K562 (cell line): ENCODE measurements at regions of chr19 and their contacts with region 1.

Region 1: DNA sequence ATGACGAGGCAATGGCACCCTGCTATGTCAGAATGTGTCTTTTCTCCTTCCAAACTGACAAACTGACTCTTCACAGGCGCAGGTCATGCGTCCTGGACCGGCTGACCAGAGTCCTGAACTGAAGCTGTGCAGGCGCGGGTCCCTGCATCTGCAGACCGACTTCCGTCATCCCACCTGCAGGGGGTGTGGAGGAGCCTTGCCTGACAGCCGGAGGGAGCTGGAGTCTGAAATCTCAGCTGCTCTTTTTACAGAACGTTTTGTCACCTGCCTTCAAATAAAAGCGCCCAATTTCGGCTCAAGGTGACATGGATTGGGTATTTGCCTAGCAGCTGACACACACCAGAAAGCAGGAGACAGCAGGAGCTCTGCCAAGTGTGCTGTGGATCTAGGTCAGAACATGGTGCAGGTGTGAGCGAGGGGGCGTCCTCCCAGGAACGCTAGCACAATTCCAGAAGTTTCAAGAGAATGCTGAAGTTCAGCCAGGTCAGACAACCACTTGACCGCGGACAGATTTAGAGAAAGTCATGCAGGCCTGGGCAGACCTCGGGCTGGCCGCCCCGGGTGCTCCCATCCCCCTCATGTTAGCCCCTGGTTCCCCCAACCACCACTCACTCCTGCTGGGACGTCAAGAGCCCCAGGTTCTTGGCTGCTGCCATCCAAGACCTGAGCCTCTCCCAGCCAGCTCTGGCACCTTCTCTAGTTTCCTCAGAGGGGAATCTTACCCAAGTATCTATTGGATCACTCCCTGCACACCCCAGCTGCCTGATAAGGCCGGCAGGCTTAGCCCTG is 32.8 kb downstream of the ELL start:
- DNase-seq: peak; percentile 55 to 68 (median 63)
- ATAC-seq: peak; percentile 69
- H3K4me3 ChIP-seq: no peak overlapping the region
- H3K27ac ChIP-seq: no peak overlapping the region
- H3K4me1 ChIP-seq: peaks cover 33 to 68% of the 10 kb centered on the region in 2 experiments
- H3K27me3 ChIP-seq: no peaks in the 10 kb centered on the region
- CTCF ChIP-seq: peak; percentile 59 to 67 (median 60)
- EP300 ChIP-seq: no peak
- POLR2A ChIP-seq: no peak
- RAD21 ChIP-seq: peak in 1 of 2 experiments; percentile 45; a peak in 3 of 4 replicates

Region 2: DNA sequence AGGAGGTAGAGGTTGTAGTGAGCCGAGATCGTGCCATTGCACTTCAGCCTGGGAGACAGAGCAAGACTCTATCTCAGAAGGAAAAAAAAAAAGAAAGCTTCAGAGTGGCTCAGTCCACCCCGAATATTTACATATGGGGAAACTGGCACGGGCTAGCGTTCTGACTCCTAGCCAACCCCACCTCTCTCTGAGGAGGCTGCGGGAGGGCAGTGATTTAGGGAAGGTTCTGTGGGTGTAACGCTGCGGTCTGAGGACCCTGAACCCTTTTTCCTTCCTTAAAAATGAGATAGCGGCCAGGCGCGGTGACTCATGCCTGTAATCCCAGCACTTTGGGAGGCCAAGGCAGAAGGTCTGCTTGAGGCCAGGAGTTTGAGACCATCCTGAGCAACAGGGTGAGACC is 96.6 kb before region 1 on chr19:
- CTCF ChIA-PET with region 1: no interaction called
- POLR2A ChIA-PET with region 1: no interaction called
- in situ Hi-C with region 1: no loop called
- intact Hi-C with region 1: no loop called
- DNase-seq: peak in 3 of 4 experiments; percentile 62 to 65 (median 65)
- ATAC-seq: no peak
- H3K4me3 ChIP-seq: no peak overlapping the region
- H3K27ac ChIP-seq: no peak overlapping the region
- H3K4me1 ChIP-seq: peaks cover 7 to 38% of the 10 kb centered on the region in 2 experiments
- H3K27me3 ChIP-seq: no peaks in the 10 kb centered on the region
- CTCF ChIP-seq: no peak
- EP300 ChIP-seq: no peak
- POLR2A ChIP-seq: no peak
- RAD21 ChIP-seq: no peak

Region 3: DNA sequence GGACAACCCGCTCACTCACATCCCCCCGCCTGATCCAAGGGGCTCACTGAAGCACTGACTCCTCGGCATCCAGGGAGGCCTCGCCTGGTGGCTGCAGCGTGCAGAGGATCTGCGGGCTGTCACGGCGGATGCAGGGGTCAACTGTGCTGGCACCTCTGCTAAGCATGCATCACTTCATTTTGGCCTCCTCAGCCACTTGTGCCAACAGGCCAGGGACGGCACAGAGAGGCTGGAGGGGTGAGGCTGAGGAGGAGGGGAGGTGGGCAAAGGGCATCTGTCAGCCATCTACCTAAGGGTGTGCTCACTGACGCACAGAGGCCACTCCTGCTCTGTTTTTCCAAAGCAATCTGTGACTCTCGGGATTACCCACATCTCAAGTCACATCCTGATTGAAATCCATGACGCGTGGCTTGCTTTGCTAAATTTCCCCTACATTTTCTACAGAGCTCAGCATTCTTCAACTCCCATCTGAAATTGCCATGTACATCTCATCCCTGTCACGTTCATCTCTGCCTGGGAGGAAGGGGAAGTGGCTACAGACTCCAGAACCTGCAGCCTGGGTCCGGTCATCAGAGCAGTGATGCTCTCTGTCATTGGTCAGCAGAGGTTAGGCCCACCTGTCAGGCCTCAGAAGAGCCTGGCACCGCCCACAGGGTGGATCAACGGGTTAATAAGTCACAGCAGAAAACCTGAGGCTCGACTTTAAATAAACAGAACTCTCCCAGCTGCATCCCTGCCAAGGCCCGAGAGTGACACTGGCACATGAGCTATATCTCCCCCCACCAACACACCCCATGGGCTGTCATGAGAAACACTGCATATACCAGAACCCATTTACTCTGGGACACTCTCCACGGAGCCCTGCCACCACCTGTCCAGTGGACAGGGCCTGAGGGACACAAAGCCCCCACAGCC is 15.2 kb after region 1 on chr19:
- CTCF ChIA-PET with region 1: no interaction called
- POLR2A ChIA-PET with region 1: interaction called, 13 read pairs
- in situ Hi-C with region 1: no loop called
- intact Hi-C with region 1: no loop called
- DNase-seq: no peak
- ATAC-seq: no peak
- H3K4me3 ChIP-seq: no peak overlapping the region
- H3K27ac ChIP-seq: no peak overlapping the region
- H3K4me1 ChIP-seq: peaks cover 22 to 66% of the 10 kb centered on the region in 2 experiments
- H3K27me3 ChIP-seq: no peaks in the 10 kb centered on the region
- CTCF ChIP-seq: no peak
- EP300 ChIP-seq: no peak
- POLR2A ChIP-seq: no peak
- RAD21 ChIP-seq: no peak